Prostate gland (tissue), 2 donors: ENCODE measurements at regions of chr11 and their contacts with region 1.

Region 1: DNA sequence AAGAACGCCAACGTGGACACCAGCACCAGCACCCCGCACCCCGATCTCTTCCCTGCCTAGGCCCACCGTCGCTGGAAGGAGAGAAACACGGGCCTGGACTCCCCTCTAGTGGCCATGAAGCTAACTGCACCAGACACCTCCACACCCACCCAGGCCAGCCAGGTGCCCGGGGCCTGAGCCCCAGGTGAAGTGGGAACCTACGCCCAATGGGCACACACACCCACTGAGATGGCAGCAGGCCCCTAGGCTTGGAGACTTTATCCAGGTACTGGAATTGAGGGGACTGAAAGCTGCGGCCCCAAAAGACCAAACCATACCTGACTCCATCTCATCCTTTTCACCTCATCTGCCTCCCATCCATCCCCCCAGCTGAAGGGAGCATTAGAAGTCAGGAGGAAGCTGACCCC is 81.0 kb downstream of the BUD13 start:
- DNase-seq: peak; percentile 16
- H3K4me3 ChIP-seq: no peak overlapping the region
- H3K27ac ChIP-seq: no peak overlapping the region
- H3K4me1 ChIP-seq: no peaks in the 10 kb centered on the region
- H3K27me3 ChIP-seq: no peaks in the 10 kb centered on the region
- CTCF ChIP-seq: peak; percentile 62 to 82 (median 66)
- POLR2A ChIP-seq: no peak

Region 2: DNA sequence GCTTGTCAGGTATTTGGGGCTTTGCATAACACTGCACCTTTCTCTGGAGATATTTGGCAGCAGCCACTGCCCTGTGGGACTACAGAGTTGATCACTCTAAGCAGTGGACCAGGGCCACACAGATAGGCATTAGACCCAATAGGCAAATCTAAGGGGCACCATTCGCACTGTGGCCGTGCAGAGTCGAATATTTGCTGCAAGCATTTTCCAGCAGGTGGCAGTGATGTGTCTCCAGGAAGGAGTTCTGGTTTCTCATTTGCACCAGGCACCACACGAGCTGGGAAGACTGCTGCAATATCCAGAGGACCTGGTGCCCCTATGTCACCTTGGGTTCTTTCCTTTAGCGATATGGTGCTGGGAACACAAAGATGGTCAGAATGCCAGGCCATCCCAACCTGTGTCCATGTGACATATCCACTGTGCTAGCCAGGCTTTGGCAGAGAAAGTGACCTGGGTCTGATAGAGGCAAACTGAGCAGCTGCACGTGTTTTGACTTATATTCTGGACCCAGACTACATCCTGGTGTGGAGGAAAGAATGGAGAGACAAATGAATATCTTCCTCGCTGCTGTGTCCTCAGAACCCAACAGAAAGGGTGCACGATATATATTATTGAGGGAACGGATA is 237.6 kb before region 1 on chr11:
- intact Hi-C with region 1: loop called (anchors 10 kb)
- DNase-seq: peak; percentile 40
- H3K4me3 ChIP-seq: no peak overlapping the region
- H3K27ac ChIP-seq: no peak overlapping the region
- H3K4me1 ChIP-seq: peaks cover 2% of the 10 kb centered on the region
- H3K27me3 ChIP-seq: peaks cover 2% of the 10 kb centered on the region
- CTCF ChIP-seq: peak in 3 of 4 experiments; percentile 39 to 61 (median 61)
- POLR2A ChIP-seq: no peak